GM10248 (cell line): ENCODE measurements at regions of chrX and their contacts with region 1.

Region 1: GRCh38 chrX:18687856-18688495 is 16.1 kb upstream of the RS1 start:
- DNase-seq: no peak
- CTCF ChIP-seq: no peak

Region 2: GRCh38 chrX:18654875-18655836 is 32.8 kb before region 1 on chrX:
- CTCF ChIA-PET with region 1: no interaction called
- POLR2A ChIA-PET with region 1: no interaction called
- DNase-seq: no peak
- CTCF ChIP-seq: no peak

Region 3: GRCh38 chrX:18668071-18668835 is 19.7 kb before region 1 on chrX:
- CTCF ChIA-PET with region 1: no interaction called
- POLR2A ChIA-PET with region 1: interaction called, 11 read pairs
- DNase-seq: peak; percentile 22
- CTCF ChIP-seq: no peak

Region 4: DNA sequence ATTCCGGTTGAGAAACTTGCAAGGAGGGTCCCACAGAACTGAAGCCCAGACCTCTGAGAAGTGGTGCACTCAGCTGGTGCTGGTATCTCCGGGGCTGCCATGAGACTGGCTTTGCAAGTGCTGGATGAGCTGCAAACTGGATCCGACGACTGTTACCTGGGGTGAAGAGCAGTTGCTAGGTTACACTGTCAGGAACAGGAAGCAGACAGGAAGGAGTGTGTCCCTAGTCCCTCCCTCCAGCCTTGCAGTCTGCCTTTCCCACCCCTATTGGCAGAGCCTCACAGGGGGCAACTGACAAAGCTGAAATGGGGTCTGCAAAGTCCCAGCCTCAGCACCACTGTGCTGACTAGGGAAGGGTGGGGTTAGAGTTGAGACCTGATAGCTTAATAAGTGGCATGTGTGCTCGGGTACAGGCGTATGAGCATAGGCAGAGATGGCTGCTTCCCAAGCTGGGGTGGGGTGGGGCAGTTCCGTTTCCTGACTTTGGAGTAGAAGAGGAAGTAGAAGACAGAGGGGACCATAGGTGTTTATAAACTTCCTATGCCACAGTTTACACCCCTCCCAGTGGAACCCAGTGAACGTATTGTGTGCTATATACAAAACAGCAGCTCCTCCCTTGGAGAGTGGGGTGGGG is 37.5 kb after region 1 on chrX:
- CTCF ChIA-PET with region 1: no interaction called
- POLR2A ChIA-PET with region 1: no interaction called
- DNase-seq: no peak
- CTCF ChIP-seq: no peak

Region 5: DNA sequence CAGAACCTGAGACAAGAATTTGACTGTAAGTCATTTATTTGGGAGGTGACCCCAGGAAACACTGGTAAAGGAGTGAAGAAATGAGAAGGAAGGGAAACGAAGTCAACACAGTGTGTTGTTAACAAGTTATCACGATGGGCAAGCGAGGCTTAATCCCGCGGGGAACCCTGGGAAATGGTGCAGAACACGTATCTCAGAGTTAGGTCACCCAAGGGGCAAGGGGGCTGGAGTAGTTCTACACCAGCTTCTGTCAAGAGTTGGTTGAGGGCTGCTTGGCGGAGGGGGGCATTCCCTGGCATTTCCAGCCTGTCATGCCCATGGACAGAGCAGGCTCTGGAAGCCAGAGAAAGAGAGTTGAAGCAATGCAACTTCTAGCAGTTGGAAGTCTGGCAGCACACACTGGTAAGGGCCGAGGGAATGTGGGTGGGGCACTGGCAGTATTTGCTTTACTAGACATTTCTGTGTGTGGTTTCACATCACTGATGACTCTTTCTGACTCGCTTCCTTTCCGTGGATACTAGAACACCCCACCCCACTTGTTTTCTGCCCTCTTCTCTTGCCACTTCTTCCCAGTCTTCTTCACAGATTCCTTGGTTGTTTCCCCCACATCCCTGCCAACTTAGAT is 486.5 kb after region 1 on chrX:
- CTCF ChIA-PET with region 1: no interaction called
- POLR2A ChIA-PET with region 1: no interaction called
- DNase-seq: no peak
- CTCF ChIP-seq: no peak